Endothelial cell of umbilical vein (primary cell): ENCODE measurements at regions of chr12 and their contacts with region 1.

Region 1: GRCh38 chr12:27332407-27333301 is at the start of gene BMAL2:
- DNase-seq: peak; percentile 58
- H3K4me3 ChIP-seq: peak within 1 kb of the TSS; percentile 86 to 94 (median 89)
- H3K27ac ChIP-seq: peak within 1 kb of the TSS; percentile 73
- H3K4me1 ChIP-seq: peaks cover 28% of the 10 kb centered on the region
- H3K27me3 ChIP-seq: no peaks in the 10 kb centered on the region
- CTCF ChIP-seq: no peak
- POLR2A ChIP-seq: peak; percentile 37
- total RNA-seq, gene BMAL2: 30.9 and 33.3 TPM in 2 replicates

Region 2: GRCh38 chr12:27652174-27652763 is 319.6 kb after region 1 on chr12:
- CTCF ChIA-PET with region 1: interaction called, 3 read pairs
- POLR2A ChIA-PET with region 1: no interaction called
- dilution Hi-C with region 1: no loop called
- intact Hi-C with region 1: loop called (anchors 5 kb)
- DNase-seq: peak; percentile 86
- H3K4me3 ChIP-seq: no peak overlapping the region
- H3K27ac ChIP-seq: no peak overlapping the region
- H3K4me1 ChIP-seq: peaks cover 8% of the 10 kb centered on the region
- H3K27me3 ChIP-seq: no peaks in the 10 kb centered on the region
- CTCF ChIP-seq: peak; percentile 67 to 69
- POLR2A ChIP-seq: no peak

Region 3: DNA sequence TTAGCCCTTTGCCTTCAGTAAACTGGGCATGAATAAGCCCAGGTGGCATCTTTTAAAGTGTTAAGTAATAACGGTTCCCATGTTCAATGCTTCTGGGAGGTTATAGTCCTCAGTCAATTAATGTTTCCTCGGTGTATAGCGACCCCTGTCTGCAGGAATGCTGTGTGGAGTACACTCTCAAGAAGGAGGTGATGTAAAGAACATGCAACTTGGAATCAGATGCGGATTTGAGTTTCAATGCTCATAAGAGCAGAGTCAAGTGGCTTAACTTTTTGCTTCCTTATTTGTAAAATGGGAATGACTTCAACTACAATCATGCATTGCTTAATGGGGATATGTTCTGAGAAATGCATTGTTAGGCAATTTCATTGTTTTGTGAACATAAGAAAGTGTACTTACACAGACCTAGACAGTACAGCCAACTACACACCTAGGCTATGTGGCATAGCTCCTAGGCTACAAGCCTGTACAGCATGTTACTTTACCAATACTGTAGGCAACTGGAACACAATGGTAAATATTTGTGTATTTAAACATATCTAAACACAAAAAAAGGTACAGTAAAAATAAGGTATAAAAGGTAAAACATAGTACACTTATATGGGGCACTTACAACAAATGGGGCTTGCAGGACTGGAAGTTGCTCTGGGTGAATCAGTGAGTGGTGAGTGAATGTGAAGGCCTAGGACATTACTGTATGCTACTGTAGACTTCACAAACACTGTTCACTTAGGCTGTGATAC is 371.2 kb after region 1 on chr12:
- CTCF ChIA-PET with region 1: no interaction called
- POLR2A ChIA-PET with region 1: no interaction called
- dilution Hi-C with region 1: no loop called
- intact Hi-C with region 1: loop called (anchors 1 kb)
- DNase-seq: peak; percentile 87
- H3K4me3 ChIP-seq: no peak overlapping the region
- H3K27ac ChIP-seq: no peak overlapping the region
- H3K4me1 ChIP-seq: no peaks in the 10 kb centered on the region
- H3K27me3 ChIP-seq: no peaks in the 10 kb centered on the region
- CTCF ChIP-seq: peak; percentile 78 to 79
- POLR2A ChIP-seq: no peak